PC-9 (cell line): ENCODE measurements at regions of chr1 and their contacts with region 1.

Region 1: GRCh38 chr1:31961536-31961935 is 23.4 kb upstream of the PTP4A2 start:
- DNase-seq: no peak
- H3K4me3 ChIP-seq: no peak overlapping the region
- H3K27ac ChIP-seq: no peak overlapping the region
- H3K4me1 ChIP-seq: peaks cover 24% of the 10 kb centered on the region
- H3K27me3 ChIP-seq: no peaks in the 10 kb centered on the region
- CTCF ChIP-seq: no peak

Region 2: GRCh38 chr1:31822766-31823165 is 138.8 kb before region 1 on chr1:
- CTCF ChIA-PET with region 1: no interaction called
- POLR2A ChIA-PET with region 1: interaction called, 14 read pairs
- intact Hi-C with region 1: loop called (anchors 5 kb)
- DNase-seq: no peak
- H3K4me3 ChIP-seq: no peak overlapping the region
- H3K27ac ChIP-seq: no peak overlapping the region
- H3K4me1 ChIP-seq: no peaks in the 10 kb centered on the region
- H3K27me3 ChIP-seq: no peaks in the 10 kb centered on the region
- CTCF ChIP-seq: no peak

Region 3: GRCh38 chr1:31843506-31843905 is 118.0 kb before region 1 on chr1:
- CTCF ChIA-PET with region 1: interaction called, 14 read pairs
- POLR2A ChIA-PET with region 1: no interaction called
- intact Hi-C with region 1: no loop called
- DNase-seq: peak; percentile 9 to 53
- H3K4me3 ChIP-seq: no peak overlapping the region
- H3K27ac ChIP-seq: no peak overlapping the region
- H3K4me1 ChIP-seq: no peaks in the 10 kb centered on the region
- H3K27me3 ChIP-seq: no peaks in the 10 kb centered on the region
- CTCF ChIP-seq: no peak

Region 4: GRCh38 chr1:32052887-32053286 is 91.4 kb after region 1 on chr1:
- CTCF ChIA-PET with region 1: no interaction called
- POLR2A ChIA-PET with region 1: no interaction called
- intact Hi-C with region 1: no loop called
- DNase-seq: peak in 1 of 2 experiments; percentile 10
- H3K4me3 ChIP-seq: no peak overlapping the region
- H3K27ac ChIP-seq: no peak overlapping the region
- H3K4me1 ChIP-seq: no peaks in the 10 kb centered on the region
- H3K27me3 ChIP-seq: no peaks in the 10 kb centered on the region
- CTCF ChIP-seq: no peak